T-cell (primary cell): ENCODE measurements at regions of chr11 and their contacts with region 1.

Region 1: DNA sequence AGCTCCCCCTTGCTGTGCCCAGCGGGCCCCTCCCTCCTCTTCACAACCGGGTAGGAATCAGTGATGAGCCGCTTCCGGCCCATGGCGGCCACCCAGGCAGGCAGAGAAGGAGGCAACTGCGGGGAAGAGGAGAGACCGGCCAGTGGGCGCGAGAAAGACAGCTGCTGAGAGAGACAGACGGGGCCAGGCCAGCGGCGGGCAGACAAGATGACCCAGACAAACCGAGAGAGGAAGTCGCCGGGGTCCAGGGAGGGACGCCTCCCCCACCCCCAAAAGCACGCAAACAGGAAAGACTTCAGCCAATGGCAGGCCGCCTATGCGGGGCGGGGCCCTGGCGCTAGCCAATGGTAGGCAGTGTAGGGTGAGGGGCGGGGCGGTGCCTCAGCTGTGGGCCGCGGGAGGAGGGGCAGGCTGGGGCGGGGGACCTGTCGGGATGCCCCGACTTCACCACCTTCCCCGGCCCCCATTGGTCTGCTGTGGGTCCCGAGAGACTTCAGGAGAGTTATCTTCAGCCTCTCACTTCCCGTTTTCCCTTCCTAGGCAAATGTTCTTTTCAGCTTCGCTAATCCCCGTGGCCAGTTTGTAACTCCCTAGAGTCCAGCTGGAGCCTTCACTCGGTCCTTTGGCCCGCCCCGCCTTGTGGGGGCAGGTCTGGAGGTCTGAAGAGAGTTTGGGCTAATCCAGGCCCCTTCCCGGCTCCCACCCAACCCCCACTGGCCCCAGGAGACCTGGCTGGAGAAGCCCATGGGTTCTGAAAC is at the start of gene POLD4:
- DNase-seq: peak; percentile 88 to 97 (median 94)
- ATAC-seq: peak; percentile 87 to 91 (median 89)
- H3K4me3 ChIP-seq: peak within 1 kb of the TSS; percentile 78 to 95
- H3K4me3 Mint-ChIP-seq: peak within 1 kb of the TSS; percentile 87 to 97 (median 96)
- H3K27ac ChIP-seq: peak within 1 kb of the TSS; percentile 98
- H3K27ac Mint-ChIP-seq: peak within 1 kb of the TSS; percentile 99 to 100
- H3K4me1 ChIP-seq: peaks cover 19 to 63% of the 10 kb centered on the region in 2 experiments
- H3K4me1 Mint-ChIP-seq: peaks cover 55 to 79% (median 57%) of the 10 kb centered on the region in 3 donors
- H3K27me3 ChIP-seq: no peaks in the 10 kb centered on the region
- H3K27me3 Mint-ChIP-seq: no peaks in the 10 kb centered on the region
- total RNA-seq, gene POLD4: 55.1 to 107 (median 98.0) TPM

Region 2: GRCh38 chr11:65662799-65663638 is 1690.5 kb before region 1 on chr11 and contains the start of gene RELA:
- CTCF ChIA-PET with region 1: no interaction called
- POLR2A ChIA-PET with region 1: interaction called in 1 of 2 experiments, 11 read pairs
- DNase-seq: peak; percentile 75 to 93 (median 85)
- ATAC-seq: peak; percentile 83 to 92 (median 89)
- H3K4me3 ChIP-seq: peak within 1 kb of the TSS; percentile 67 to 97
- H3K4me3 Mint-ChIP-seq: peak within 1 kb of the TSS; percentile 86 to 87 (median 87)
- H3K27ac ChIP-seq: peak within 1 kb of the TSS; percentile 94
- H3K27ac Mint-ChIP-seq: peak within 1 kb of the TSS; percentile 94
- H3K4me1 ChIP-seq: peaks cover 6 to 56% of the 10 kb centered on the region in 2 experiments
- H3K4me1 Mint-ChIP-seq: peaks cover 33 to 41% (median 35%) of the 10 kb centered on the region in 3 donors
- H3K27me3 ChIP-seq: no peaks in the 10 kb centered on the region
- H3K27me3 Mint-ChIP-seq: no peaks in the 10 kb centered on the region
- total RNA-seq, gene RELA: 155 to 302 (median 172) TPM

Region 3: DNA sequence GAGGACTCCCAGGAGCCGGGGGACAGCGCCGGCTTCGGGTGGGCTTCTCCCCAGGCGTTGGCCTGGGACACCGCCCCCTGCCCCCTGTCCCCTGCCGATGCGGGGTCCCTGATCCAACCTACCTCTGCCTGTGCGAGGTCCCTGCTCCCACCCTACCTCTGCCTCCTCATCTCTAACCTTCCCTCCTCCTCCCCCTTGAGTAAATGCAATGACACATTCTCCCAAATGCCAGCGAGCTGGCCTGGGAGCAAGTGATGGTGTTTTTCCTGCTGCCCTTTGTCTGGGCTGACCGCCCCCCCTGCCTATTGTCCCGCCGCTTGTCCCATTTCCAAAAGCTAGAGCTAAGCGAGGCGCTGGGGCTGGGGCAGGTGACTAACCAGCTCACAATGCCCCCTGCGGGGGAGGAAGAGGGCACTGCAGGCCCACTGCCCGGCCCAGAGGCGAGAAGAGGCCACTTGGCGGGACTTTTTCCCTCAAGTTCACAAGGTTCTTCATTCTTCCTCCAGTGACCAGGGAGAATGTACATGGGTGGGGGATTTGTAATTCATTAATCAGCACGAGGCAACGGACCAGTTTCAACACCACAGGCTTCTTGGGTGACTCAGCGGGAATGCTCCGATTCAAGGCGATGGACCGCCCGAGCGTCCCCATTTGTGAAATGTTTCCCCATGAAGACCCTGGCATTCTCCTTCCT is 20.6 kb after region 1 on chr11:
- CTCF ChIA-PET with region 1: interaction called, 5 to 128 read pairs
- POLR2A ChIA-PET with region 1: interaction called in 1 of 2 experiments, 17 read pairs
- DNase-seq: peak in 19 of 35 experiments; percentile 20 to 66 (median 41)
- ATAC-seq: peak; percentile 34 to 46 (median 42)
- H3K4me3 ChIP-seq: peak overlapping the region; percentile 45 to 46
- H3K4me3 Mint-ChIP-seq: peak overlapping the region; percentile 76 to 89 (median 84)
- H3K27ac ChIP-seq: peak overlapping the region; percentile 20
- H3K27ac Mint-ChIP-seq: peak overlapping the region; percentile 63 to 68
- H3K4me1 ChIP-seq: peaks cover 8 to 62% of the 10 kb centered on the region in 2 experiments
- H3K4me1 Mint-ChIP-seq: peaks cover 41 to 48% (median 44%) of the 10 kb centered on the region in 3 donors
- H3K27me3 ChIP-seq: peaks cover 0 to 44% of the 10 kb centered on the region in 2 experiments
- H3K27me3 Mint-ChIP-seq: peaks cover 10 to 17% of the 10 kb centered on the region in 2 donors

Region 4: GRCh38 chr11:67382276-67383136 is 29.0 kb after region 1 on chr11:
- CTCF ChIA-PET with region 1: interaction called, 37 to 128 read pairs
- POLR2A ChIA-PET with region 1: interaction called in 1 of 2 experiments, 3 read pairs
- DNase-seq: peak; percentile 54 to 90 (median 78)
- ATAC-seq: peak; percentile 91 to 95 (median 92)
- H3K4me3 ChIP-seq: no peak overlapping the region
- H3K4me3 Mint-ChIP-seq: no peak overlapping the region
- H3K27ac ChIP-seq: no peak overlapping the region
- H3K27ac Mint-ChIP-seq: peak overlapping the region in 1 of 2 donors; percentile 19
- H3K4me1 ChIP-seq: peaks cover 0 to 8% of the 10 kb centered on the region in 2 experiments
- H3K4me1 Mint-ChIP-seq: peaks cover 5 to 13% (median 5%) of the 10 kb centered on the region in 3 donors
- H3K27me3 ChIP-seq: peaks cover 0 to 14% of the 10 kb centered on the region in 2 experiments
- H3K27me3 Mint-ChIP-seq: peaks cover 3 to 8% of the 10 kb centered on the region in 2 donors

Region 5: DNA sequence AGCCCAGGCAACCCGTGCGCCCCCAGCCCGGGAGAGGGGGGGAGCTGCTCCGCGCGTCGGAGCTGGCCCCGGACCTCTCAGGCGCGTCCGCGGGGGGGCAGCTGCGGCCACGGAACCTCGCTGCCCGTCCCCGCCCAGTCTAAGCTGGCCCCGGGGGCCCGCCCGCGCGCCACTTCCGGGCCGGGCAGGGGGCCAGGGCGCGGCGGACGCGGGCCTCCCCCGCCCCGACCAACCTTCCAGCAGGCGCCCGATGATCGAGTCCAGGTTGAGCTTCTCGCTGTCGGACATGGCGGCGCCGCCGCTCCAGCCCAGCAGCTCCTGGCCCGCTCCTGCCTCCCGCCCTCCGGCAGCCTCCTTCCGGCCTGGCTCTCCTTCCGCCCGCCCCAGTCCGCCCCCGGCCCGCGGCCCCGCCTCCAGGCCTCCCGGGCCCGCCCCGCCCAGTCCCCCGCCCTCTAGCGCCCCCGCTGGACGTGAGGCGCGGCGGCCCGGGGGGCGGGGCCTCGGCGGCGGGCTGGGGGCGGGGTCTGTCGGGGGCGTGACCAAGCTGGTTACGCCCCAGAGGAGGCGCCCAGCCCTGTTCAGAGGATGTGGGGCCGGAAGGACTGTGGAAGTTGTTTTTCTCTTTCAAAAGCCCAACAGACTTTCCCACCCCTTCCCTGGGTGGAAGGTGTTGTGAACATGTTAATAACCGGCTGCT is 48.1 kb after region 1 on chr11 and contains the start of gene PPP1CA:
- CTCF ChIA-PET with region 1: interaction called in 1 of 2 experiments, 17 read pairs
- POLR2A ChIA-PET with region 1: no interaction called
- DNase-seq: peak; percentile 78 to 96 (median 90)
- ATAC-seq: peak; percentile 67 to 75 (median 72)
- H3K4me3 ChIP-seq: peak within 1 kb of the TSS; percentile 81 to 97
- H3K4me3 Mint-ChIP-seq: peak within 1 kb of the TSS; percentile 88 to 97 (median 96)
- H3K27ac ChIP-seq: peak within 1 kb of the TSS; percentile 74
- H3K27ac Mint-ChIP-seq: peak within 1 kb of the TSS; percentile 96
- H3K4me1 ChIP-seq: peaks cover 30 to 88% of the 10 kb centered on the region in 2 experiments
- H3K4me1 Mint-ChIP-seq: peaks cover 63 to 76% (median 66%) of the 10 kb centered on the region in 3 donors
- H3K27me3 ChIP-seq: no peaks in the 10 kb centered on the region
- H3K27me3 Mint-ChIP-seq: no peaks in the 10 kb centered on the region
- total RNA-seq, gene PPP1CA: 118 to 198 (median 186) TPM

Region 6: DNA sequence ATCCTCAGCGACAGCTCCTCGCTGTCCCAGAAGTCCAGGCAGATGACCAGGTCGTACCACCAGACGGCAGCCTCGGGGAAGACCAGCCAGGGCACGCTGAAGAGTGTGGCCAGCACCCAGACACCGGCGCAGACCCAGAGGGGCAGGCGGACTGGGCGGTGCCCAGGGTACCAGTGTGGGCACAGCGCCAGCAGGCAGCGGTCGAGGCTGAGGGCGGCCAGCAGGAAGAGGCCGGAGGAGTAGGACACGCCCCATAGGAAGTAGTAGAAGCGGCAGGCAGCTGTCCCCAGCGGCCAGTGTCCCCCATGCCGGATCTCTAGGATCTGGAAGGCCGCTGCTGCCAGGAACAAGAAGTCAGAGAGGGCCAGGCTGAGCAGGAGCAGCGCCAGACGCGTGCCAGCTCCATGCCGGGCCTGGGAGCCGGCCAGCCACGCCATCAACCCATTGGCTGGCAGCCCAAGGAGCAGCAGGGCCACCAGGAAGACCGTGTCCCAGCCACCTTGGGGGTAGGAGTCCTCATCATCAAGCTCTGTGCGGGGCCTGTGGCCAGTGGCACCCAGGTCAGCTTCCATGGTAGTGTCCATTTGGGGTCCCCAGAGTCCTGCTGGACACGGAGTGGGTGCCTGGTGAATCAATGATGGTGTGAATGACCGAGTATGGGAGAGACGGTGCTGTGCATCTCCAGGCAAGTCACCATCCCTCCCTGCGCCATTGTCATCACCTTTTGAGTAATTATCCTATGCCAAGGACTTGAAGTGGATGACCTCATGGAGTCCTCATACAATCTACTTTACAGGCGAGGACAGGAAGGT is 98.9 kb after region 1 on chr11 and contains the start of gene GPR152:
- CTCF ChIA-PET with region 1: no interaction called
- POLR2A ChIA-PET with region 1: no interaction called
- DNase-seq: no peak
- ATAC-seq: no peak
- H3K4me3 ChIP-seq: no peak within 1 kb of the TSS
- H3K4me3 Mint-ChIP-seq: no peak within 1 kb of the TSS
- H3K27ac ChIP-seq: no peak within 1 kb of the TSS
- H3K27ac Mint-ChIP-seq: peak within 1 kb of the TSS in 1 of 2 donors; percentile 52
- H3K4me1 ChIP-seq: peaks cover 11 to 50% of the 10 kb centered on the region in 2 experiments
- H3K4me1 Mint-ChIP-seq: peaks cover 29 to 31% (median 29%) of the 10 kb centered on the region in 3 donors
- H3K27me3 ChIP-seq: peaks cover 0 to 24% of the 10 kb centered on the region in 2 experiments
- H3K27me3 Mint-ChIP-seq: no peaks in the 10 kb centered on the region
- total RNA-seq, gene GPR152: 0.19 TPM in 1 of 5 donors, not detected in the others